Adrenal gland (tissue), 19 donors: ENCODE measurements at regions of chr18 and their contacts with region 1.

Region 1: GRCh38 chr18:34322365-34323289 is 97.9 kb upstream of the NOL4 start:
- DNase-seq: peak in 6 of 7 donors; percentile 11 to 81 (median 51)
- H3K4me3 ChIP-seq: no peak overlapping the region
- H3K27ac ChIP-seq: no peak overlapping the region
- H3K4me1 ChIP-seq: no peaks in the 10 kb centered on the region
- H3K27me3 ChIP-seq: no peaks in the 10 kb centered on the region
- CTCF ChIP-seq: peak in 5 of 6 experiments; percentile 21 to 56 (median 41)
- POLR2A ChIP-seq: no peak

Region 2: DNA sequence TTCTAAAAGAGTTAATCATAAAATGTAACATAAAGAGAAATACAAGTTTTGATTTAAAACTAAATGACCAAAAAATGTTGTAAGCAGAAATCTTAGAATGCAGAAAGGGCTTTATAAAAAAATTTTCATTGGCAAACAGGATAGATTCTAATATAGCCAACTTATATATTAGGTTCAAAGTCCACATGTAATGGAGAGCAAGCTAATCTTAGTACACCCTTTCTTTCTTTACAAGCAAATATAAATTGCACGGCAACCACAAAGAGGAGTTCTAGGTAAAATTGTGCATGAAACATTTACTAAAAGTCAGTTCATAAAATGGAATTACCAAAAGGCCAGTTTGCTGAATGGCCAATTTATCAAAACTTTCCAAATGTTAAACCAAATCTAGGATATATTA is 228.5 kb before region 1 on chr18:
- intact Hi-C with region 1: no loop called
- DNase-seq: no peak
- H3K4me3 ChIP-seq: no peak overlapping the region
- H3K27ac ChIP-seq: no peak overlapping the region
- H3K4me1 ChIP-seq: no peaks in the 10 kb centered on the region
- H3K27me3 ChIP-seq: no peaks in the 10 kb centered on the region
- CTCF ChIP-seq: no peak
- POLR2A ChIP-seq: no peak

Region 3: GRCh38 chr18:34122724-34123334 is 199.8 kb before region 1 on chr18:
- intact Hi-C with region 1: loop called in 1 of 2 experiments (anchors 5 kb)
- DNase-seq: peak; percentile 8 to 62 (median 27)
- H3K4me3 ChIP-seq: no peak overlapping the region
- H3K27ac ChIP-seq: no peak overlapping the region
- H3K4me1 ChIP-seq: no peaks in the 10 kb centered on the region
- H3K27me3 ChIP-seq: no peaks in the 10 kb centered on the region
- CTCF ChIP-seq: peak; percentile 56 to 84 (median 74)
- POLR2A ChIP-seq: no peak

Region 4: GRCh38 chr18:34370704-34371405 is 48.2 kb after region 1 on chr18:
- intact Hi-C with region 1: no loop called
- DNase-seq: no peak
- H3K4me3 ChIP-seq: no peak overlapping the region
- H3K27ac ChIP-seq: no peak overlapping the region
- H3K4me1 ChIP-seq: no peaks in the 10 kb centered on the region
- H3K27me3 ChIP-seq: no peaks in the 10 kb centered on the region
- CTCF ChIP-seq: no peak
- POLR2A ChIP-seq: no peak

Region 5: DNA sequence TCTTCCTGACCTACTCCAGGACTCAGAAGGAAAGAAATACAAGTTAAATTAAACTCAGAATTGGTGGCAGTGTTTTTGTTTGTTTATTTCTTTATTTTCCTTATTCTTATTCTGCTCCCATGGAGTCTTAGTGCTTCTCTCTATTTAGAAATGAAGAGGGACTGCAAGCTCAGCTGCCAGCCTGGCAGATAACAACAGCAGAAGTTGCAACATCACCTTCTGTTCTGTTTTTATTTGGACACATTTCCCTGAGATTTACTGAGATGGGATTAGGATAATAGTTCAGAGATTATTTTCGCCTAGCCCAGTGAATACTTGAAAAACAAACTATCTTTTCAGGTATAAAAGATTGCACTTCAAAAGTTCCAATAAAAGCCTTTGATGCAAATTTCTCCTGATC is 317.1 kb after region 1 on chr18:
- intact Hi-C with region 1: no loop called
- DNase-seq: peak in 1 of 7 donors; percentile 38
- H3K4me3 ChIP-seq: no peak overlapping the region
- H3K27ac ChIP-seq: no peak overlapping the region
- H3K4me1 ChIP-seq: no peaks in the 10 kb centered on the region
- H3K27me3 ChIP-seq: no peaks in the 10 kb centered on the region
- CTCF ChIP-seq: no peak
- POLR2A ChIP-seq: no peak